PC-3 (cell line): ENCODE measurements at regions of chr7 and their contacts with region 1.

Region 1: GRCh38 chr7:82172017-82172416 is 271.6 kb downstream of the CACNA2D1 start:
- DNase-seq: peak; percentile 32
- ATAC-seq: peak; percentile 70
- H3K4me3 ChIP-seq: no peak overlapping the region
- H3K27ac ChIP-seq: no peak overlapping the region
- H3K4me1 ChIP-seq: no peaks in the 10 kb centered on the region
- H3K27me3 ChIP-seq: peaks cover 65% of the 10 kb centered on the region
- CTCF ChIP-seq: peak; percentile 63

Region 2: GRCh38 chr7:82362129-82362706 is 190.2 kb after region 1 on chr7:
- CTCF ChIA-PET with region 1: no interaction called
- POLR2A ChIA-PET with region 1: no interaction called
- intact Hi-C with region 1: loop called (anchors 5 kb)
- DNase-seq: no peak
- ATAC-seq: no peak
- H3K4me3 ChIP-seq: no peak overlapping the region
- H3K27ac ChIP-seq: no peak overlapping the region
- H3K4me1 ChIP-seq: no peaks in the 10 kb centered on the region
- H3K27me3 ChIP-seq: peaks cover 18% of the 10 kb centered on the region
- CTCF ChIP-seq: no peak

Region 3: GRCh38 chr7:82443547-82444219 is 271.7 kb after region 1 on chr7 and contains the start of gene CACNA2D1:
- CTCF ChIA-PET with region 1: no interaction called
- POLR2A ChIA-PET with region 1: no interaction called
- intact Hi-C with region 1: loop called (anchors 10 kb)
- DNase-seq: peak; percentile 5
- ATAC-seq: peak; percentile 67
- H3K4me3 ChIP-seq: peak within 1 kb of the TSS; percentile 66
- H3K27ac ChIP-seq: no peak within 1 kb of the TSS
- H3K4me1 ChIP-seq: peaks cover 7% of the 10 kb centered on the region; the same call in 1 of the 2 replicates
- H3K27me3 ChIP-seq: peaks cover 68% of the 10 kb centered on the region
- CTCF ChIP-seq: no peak
- total RNA-seq, gene CACNA2D1: 0.77 and 1.1 TPM in 2 replicates

Region 4: DNA sequence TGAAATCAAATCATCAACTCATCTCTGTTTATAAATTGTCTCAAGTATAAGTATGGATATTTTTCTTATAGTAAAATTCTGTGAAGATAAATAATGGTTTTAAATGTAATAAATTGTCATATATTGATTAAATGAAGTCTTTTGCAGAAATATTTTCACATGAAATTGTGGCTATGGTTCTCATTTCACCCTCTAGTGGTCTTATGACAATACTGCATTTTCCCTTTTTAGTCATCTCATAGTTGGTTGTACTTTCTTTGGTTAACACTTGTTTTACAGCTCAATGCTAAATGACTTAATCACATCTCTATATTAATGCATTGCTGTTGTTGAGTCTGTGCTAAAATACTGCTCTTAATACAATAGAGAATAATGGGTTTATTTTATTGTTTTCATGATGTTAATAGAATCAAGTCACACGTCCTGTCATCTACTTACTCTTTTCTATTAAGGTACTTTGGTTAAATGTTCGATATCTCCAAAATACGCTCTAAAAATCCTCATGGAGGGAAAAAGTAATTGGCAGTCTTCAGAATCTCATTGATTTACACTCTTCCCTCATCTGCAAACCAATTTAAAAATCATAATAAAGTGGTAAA is 309.6 kb after region 1 on chr7:
- CTCF ChIA-PET with region 1: no interaction called
- POLR2A ChIA-PET with region 1: no interaction called
- intact Hi-C with region 1: loop called (anchors 5 kb)
- DNase-seq: peak; percentile 43
- ATAC-seq: no peak
- H3K4me3 ChIP-seq: no peak overlapping the region
- H3K27ac ChIP-seq: no peak overlapping the region
- H3K4me1 ChIP-seq: no peaks in the 10 kb centered on the region
- H3K27me3 ChIP-seq: peaks cover 7% of the 10 kb centered on the region
- CTCF ChIP-seq: peak; percentile 69

Region 5: GRCh38 chr7:82605247-82605872 is 433.3 kb after region 1 on chr7:
- CTCF ChIA-PET with region 1: no interaction called
- POLR2A ChIA-PET with region 1: no interaction called
- intact Hi-C with region 1: loop called (anchors 10 kb)
- DNase-seq: peak; percentile 59
- ATAC-seq: no peak
- H3K4me3 ChIP-seq: no peak overlapping the region
- H3K27ac ChIP-seq: no peak overlapping the region
- H3K4me1 ChIP-seq: no peaks in the 10 kb centered on the region
- H3K27me3 ChIP-seq: no peaks in the 10 kb centered on the region; the same call in 1 of the 2 replicates
- CTCF ChIP-seq: peak; percentile 82